ENCODE measurements at regions of chr7 and their contacts with region 1.

Region 1: GRCh38 chr7:66281678-66282590 is 76.8 kb downstream of the TPST1 start:
- DNase-seq: peak; percentile 80
- H3K4me3 Mint-ChIP-seq: peak overlapping the region; percentile 19
- H3K27ac Mint-ChIP-seq: peak overlapping the region; percentile 83
- H3K4me1 Mint-ChIP-seq: peaks cover 38% of the 10 kb centered on the region
- H3K27me3 Mint-ChIP-seq: no peaks in the 10 kb centered on the region
- CTCF ChIP-seq: no peak

Region 2: DNA sequence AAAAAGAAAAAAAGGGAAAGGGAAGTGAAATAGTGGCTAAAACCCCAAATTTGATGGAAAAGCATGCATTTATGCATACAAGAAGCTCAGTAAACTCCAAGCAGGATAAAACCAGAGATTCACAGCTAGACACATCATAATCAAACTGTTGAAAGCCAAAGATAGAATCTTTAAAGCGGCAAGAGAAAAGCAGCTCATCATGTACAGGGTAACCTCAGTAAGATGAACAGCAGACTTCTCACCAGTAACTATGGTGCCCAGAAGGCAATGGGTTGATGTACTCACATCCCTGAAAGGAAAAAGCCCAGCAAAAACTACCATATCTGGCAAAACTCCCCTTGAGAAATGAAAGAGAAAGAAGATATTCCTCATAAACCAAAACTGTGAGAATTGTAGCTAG is 16.4 kb before region 1 on chr7:
- CTCF ChIA-PET with region 1: interaction called, 4 read pairs
- POLR2A ChIA-PET with region 1: interaction called, 65 read pairs
- intact Hi-C with region 1: no loop called
- DNase-seq: peak; percentile 47
- H3K4me3 Mint-ChIP-seq: no peak overlapping the region
- H3K27ac Mint-ChIP-seq: no peak overlapping the region
- H3K4me1 Mint-ChIP-seq: peaks cover 29% of the 10 kb centered on the region
- H3K27me3 Mint-ChIP-seq: no peaks in the 10 kb centered on the region
- CTCF ChIP-seq: no peak

Region 3: GRCh38 chr7:66296001-66296521 is 14.1 kb after region 1 on chr7:
- CTCF ChIA-PET with region 1: no interaction called
- POLR2A ChIA-PET with region 1: interaction called, 30 read pairs
- intact Hi-C with region 1: no loop called
- DNase-seq: peak; percentile 22
- H3K4me3 Mint-ChIP-seq: no peak overlapping the region
- H3K27ac Mint-ChIP-seq: no peak overlapping the region
- H3K4me1 Mint-ChIP-seq: peaks cover 16% of the 10 kb centered on the region
- H3K27me3 Mint-ChIP-seq: no peaks in the 10 kb centered on the region
- CTCF ChIP-seq: no peak

Measured in MCF 10A (cell line).